Transverse colon (tissue), 4 donors: ENCODE measurements at regions of chr12 and their contacts with region 1.

Region 1: DNA sequence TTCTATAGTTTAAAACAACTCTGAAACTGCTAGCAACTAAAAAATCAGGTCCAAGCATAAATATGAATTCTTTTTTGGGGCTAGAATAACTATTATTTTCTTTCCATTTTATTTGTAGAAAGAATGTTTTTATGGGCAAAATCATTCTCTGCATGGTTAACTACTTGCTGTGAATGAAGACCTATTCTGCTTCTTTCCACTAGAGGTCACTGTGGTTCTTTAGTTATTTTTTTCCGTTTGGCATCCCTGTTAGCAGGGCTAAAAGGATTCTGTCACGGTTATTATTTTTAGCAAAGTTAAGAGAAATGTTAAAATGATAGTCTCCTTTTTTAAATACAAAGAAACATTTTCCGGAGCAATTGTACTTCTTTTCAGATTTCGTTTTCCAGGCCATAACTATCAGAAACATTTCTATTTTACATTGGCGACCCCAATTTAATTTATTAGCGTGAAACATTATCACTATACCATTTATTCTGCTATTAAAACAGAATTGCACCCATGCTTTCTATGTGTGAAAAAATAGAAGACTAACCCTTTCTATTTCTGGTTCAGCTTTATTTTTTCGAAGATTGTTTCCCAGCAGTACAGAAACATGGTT is 404.8 kb downstream of the ATP23 start:
- DNase-seq: no peak
- H3K4me3 ChIP-seq: no peak overlapping the region
- H3K27ac ChIP-seq: no peak overlapping the region
- H3K4me1 ChIP-seq: peaks cover 0 to 11% (median 5%) of the 10 kb centered on the region in 4 donors
- H3K27me3 ChIP-seq: no peaks in the 10 kb centered on the region
- CTCF ChIP-seq: peak; percentile 68 to 89 (median 77)
- EP300 ChIP-seq: no peak
- POLR2A ChIP-seq: no peak

Region 2: GRCh38 chr12:59173686-59174085 is 827.6 kb after region 1 on chr12:
- in situ Hi-C with region 1: loop called in 1 of 4 experiments (anchors 25 kb)
- intact Hi-C with region 1: loop called (anchors 10 kb)
- DNase-seq: no peak
- H3K4me3 ChIP-seq: no peak overlapping the region
- H3K27ac ChIP-seq: no peak overlapping the region
- H3K4me1 ChIP-seq: no peaks in the 10 kb centered on the region
- H3K27me3 ChIP-seq: no peaks in the 10 kb centered on the region
- CTCF ChIP-seq: peak in 1 of 5 experiments; percentile 4
- EP300 ChIP-seq: no peak
- POLR2A ChIP-seq: no peak